ENCODE measurements at regions of chr3 and their contacts with region 1.

Region 1: GRCh38 chr3:189824629-189825312 is 193.6 kb downstream of the TP63 start:
- DNase-seq: no peak
- ATAC-seq: no peak

Region 2: DNA sequence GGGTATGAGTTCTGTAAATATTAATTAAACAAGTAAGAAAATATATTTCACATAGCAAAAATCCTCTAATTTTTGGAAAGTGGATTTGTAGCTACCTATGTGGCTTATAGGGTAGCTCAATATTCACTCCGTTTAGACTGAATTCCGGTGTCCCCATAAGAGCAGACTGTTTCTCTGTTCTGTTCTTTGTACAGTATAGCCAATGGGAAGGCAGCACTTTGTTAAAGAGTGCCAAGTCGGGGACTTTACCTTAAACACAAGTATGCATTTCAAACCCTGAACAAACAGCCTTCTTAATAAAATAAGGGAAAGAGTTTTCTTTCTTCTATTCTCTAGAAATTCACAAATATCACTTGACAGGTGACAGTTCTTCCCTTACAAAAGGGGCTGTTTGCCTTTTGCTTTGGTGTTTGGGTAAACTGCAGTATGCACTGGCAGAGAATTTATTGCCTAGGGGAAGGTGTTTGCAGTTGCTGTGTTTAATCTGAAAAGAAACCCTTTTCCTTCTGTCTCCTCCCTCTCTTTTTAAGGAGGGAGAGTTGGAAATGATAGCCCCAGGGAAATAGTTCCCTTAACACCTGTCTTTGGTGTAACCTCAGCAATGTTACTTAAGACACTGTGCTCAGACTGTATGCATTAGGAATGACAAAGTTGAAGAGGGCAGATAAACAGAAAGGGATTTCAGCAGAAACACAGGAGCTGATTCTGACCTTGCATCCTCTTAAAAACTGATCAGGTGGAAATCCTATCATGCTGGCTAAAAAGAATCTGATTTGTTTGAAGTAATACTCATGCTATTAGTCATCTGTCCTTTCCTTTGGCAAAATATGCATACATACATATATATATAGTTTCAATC is 68.3 kb before region 1 on chr3:
- intact Hi-C with region 1: no loop called
- DNase-seq: no peak
- ATAC-seq: no peak

Region 3: DNA sequence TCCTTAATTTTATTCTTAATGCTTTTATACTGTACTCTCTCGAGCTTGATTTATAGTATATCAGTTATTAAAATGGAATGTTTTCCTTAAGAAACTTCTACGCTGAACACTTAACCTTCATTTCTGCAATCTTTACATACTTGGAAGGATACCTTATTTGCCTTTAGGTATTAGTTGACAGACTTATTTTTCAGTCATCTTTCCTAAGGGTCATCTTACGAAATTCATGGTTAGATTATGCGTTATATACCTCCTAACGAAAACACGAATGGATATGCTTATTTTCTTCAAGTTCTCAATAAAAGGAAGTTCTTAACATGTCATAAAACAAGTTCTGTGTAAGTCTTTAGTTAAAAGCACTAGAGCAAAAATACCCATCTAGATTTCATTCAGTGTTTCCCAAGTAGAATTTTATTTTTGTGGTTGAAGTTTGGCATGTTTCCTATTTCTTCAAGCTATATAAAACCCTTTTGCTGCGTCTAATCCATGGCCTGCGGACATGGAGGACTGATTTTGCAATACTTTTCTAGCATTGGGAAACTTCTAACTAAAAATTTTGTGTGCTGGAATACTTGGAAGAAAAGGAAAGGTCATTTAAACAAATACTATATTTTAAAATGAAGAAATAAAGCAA is 37.7 kb after region 1 on chr3:
- intact Hi-C with region 1: loop called (anchors 5 kb)
- DNase-seq: no peak
- ATAC-seq: no peak

Region 4: DNA sequence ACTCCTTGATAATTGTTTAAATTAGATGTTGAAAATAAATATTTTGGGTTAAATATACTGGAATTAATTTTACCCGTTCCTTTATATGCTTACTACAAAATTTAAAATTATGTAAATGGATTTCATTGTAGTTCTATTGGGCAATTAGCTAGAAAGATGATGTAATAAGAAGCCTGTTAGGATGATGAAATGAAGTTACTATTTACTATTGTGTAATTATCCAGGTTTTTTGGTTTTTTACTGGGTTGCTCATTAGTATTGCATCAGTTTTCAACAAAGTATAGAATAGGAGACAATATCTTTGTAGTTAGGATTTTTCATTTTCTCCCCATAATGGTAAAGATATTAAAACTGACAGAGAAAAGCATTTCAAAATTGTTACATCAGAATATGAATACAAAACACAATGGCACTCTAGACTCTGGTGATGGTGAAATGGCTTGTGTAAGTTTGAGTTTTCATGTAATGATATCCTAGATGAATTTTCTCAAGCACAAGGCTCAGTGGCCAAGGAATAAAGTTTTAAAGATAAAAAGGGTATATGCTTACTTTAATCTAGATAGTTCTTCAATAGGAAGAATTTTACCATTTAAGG is 73.9 kb after region 1 on chr3:
- intact Hi-C with region 1: no loop called
- DNase-seq: no peak
- ATAC-seq: no peak

Measured in Right ventricle myocardium inferior (tissue), 1 donor.